Tibial artery (tissue), 4 donors: ENCODE measurements at regions of chr11 and their contacts with region 1.

Region 1: GRCh38 chr11:111422494-111423249 is 43.6 kb upstream of the POU2AF1 start:
- DNase-seq: peak in 1 of 2 donors; percentile 39
- H3K4me3 ChIP-seq: no peak overlapping the region
- H3K27ac ChIP-seq: no peak overlapping the region
- H3K4me1 ChIP-seq: peaks cover 0 to 24% (median 21%) of the 10 kb centered on the region in 4 donors
- H3K27me3 ChIP-seq: peaks cover 0 to 2% of the 10 kb centered on the region in 2 donors
- CTCF ChIP-seq: peak; percentile 79 to 81

Region 2: GRCh38 chr11:111299101-111300026 is 123.3 kb before region 1 on chr11:
- intact Hi-C with region 1: loop called (anchors 5 kb)
- DNase-seq: peak; percentile 55 to 81
- H3K4me3 ChIP-seq: peak overlapping the region; percentile 72 to 80
- H3K27ac ChIP-seq: peak overlapping the region; percentile 85 to 86
- H3K4me1 ChIP-seq: peaks cover 0 to 29% (median 10%) of the 10 kb centered on the region in 4 donors
- H3K27me3 ChIP-seq: no peaks in the 10 kb centered on the region
- CTCF ChIP-seq: peak; percentile 76 to 80